ENCODE measurements at regions of chr5 and their contacts with region 1.

Region 1: DNA sequence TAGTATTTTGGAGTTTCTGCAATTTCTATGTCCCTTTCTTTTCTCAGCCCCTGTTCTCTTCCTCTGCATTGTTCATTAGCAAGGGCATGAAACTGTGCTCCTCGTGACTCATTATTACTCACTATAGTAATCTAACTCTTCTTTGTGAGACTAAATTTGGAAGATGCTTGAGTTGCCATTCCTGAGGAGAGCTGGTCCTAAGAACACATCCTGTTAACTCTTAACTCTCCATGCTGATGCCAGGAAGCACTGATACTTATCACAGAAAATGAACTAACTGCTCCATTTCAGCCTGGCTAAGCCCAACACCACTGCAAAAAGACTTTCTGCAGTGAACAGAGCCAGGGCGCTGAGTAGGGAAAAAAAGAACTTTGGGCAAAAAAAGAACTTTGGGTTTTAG is 10.6 kb upstream of the CSNK1A1 start:
- DNase-seq: peak; percentile 99
- ATAC-seq: peak; percentile 90
- H3K4me3 ChIP-seq: peak overlapping the region; percentile 61
- H3K27ac ChIP-seq: peak overlapping the region; percentile 92
- H3K4me1 ChIP-seq: peaks cover 41% of the 10 kb centered on the region
- H3K27me3 ChIP-seq: no peaks in the 10 kb centered on the region
- CTCF ChIP-seq: no peak

Region 2: GRCh38 chr5:149133795-149134780 is 427.8 kb before region 1 on chr5:
- CTCF ChIA-PET with region 1: interaction called, 3 read pairs
- POLR2A ChIA-PET with region 1: no interaction called
- intact Hi-C with region 1: loop called (anchors 10 kb)
- DNase-seq: peak; percentile 100
- ATAC-seq: peak; percentile 76
- H3K4me3 ChIP-seq: peak overlapping the region; percentile 1; the same call in 1 of the 2 replicates
- H3K27ac ChIP-seq: peak overlapping the region; percentile 86
- H3K4me1 ChIP-seq: peaks cover 64% of the 10 kb centered on the region
- H3K27me3 ChIP-seq: no peaks in the 10 kb centered on the region
- CTCF ChIP-seq: no peak

Region 3: GRCh38 chr5:149381987-149382340 is 179.9 kb before region 1 on chr5:
- CTCF ChIA-PET with region 1: interaction called, 8 read pairs
- POLR2A ChIA-PET with region 1: no interaction called
- intact Hi-C with region 1: loop called (anchors 1 kb)
- DNase-seq: peak; percentile 89
- ATAC-seq: peak; percentile 98
- H3K4me3 ChIP-seq: no peak overlapping the region
- H3K27ac ChIP-seq: no peak overlapping the region
- H3K4me1 ChIP-seq: no peaks in the 10 kb centered on the region
- H3K27me3 ChIP-seq: no peaks in the 10 kb centered on the region
- CTCF ChIP-seq: peak; percentile 99

Region 4: GRCh38 chr5:149442563-149443182 is 119.2 kb before region 1 on chr5:
- CTCF ChIA-PET with region 1: interaction called, 8 read pairs
- POLR2A ChIA-PET with region 1: no interaction called
- intact Hi-C with region 1: loop called (anchors 1 kb)
- DNase-seq: peak; percentile 95
- ATAC-seq: peak; percentile 51
- H3K4me3 ChIP-seq: no peak overlapping the region
- H3K27ac ChIP-seq: peak overlapping the region; percentile 28
- H3K4me1 ChIP-seq: peaks cover 49% of the 10 kb centered on the region
- H3K27me3 ChIP-seq: no peaks in the 10 kb centered on the region
- CTCF ChIP-seq: peak; percentile 99

Region 5: GRCh38 chr5:149551200-149552037 is 10.4 kb before region 1 on chr5 and contains the start of gene CSNK1A1:
- CTCF ChIA-PET with region 1: interaction called, 4 read pairs
- POLR2A ChIA-PET with region 1: interaction called, 31 read pairs
- intact Hi-C with region 1: loop called (anchors 1 kb)
- DNase-seq: peak; percentile 100
- ATAC-seq: peak; percentile 89
- H3K4me3 ChIP-seq: peak within 1 kb of the TSS; percentile 93
- H3K27ac ChIP-seq: peak within 1 kb of the TSS; percentile 85
- H3K4me1 ChIP-seq: peaks cover 36% of the 10 kb centered on the region
- H3K27me3 ChIP-seq: no peaks in the 10 kb centered on the region
- CTCF ChIP-seq: peak; percentile 98
- total RNA-seq, gene CSNK1A1: 500 and 586 TPM in 2 replicates

Region 6: DNA sequence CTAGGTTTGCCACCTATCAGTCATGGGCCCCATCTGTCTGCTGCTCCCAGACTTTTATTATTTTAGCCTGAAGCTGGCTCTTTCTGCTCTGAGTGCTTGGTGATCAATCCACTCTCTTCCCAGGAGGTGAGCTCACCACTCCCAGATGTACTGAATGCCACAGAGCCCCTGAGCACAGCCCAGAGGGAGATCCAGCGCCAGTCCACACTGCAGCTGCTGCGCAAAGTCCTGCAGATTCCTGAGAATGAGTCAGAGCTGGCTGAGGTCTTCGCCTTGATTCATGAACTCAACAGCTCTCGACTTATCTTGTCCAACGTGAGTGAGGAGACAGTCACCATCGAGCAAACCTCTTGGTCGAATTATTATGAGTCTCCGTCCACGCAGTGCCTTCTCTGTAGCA is 474.7 kb after region 1 on chr5:
- CTCF ChIA-PET with region 1: no interaction called
- POLR2A ChIA-PET with region 1: interaction called, 14 read pairs
- intact Hi-C with region 1: no loop called
- DNase-seq: peak; percentile 88
- ATAC-seq: peak; percentile 99
- H3K4me3 ChIP-seq: no peak overlapping the region
- H3K27ac ChIP-seq: peak overlapping the region; percentile 27
- H3K4me1 ChIP-seq: peaks cover 21% of the 10 kb centered on the region
- H3K27me3 ChIP-seq: no peaks in the 10 kb centered on the region
- CTCF ChIP-seq: no peak